Tibial artery (tissue), 4 donors: ENCODE measurements at regions of chr20 and their contacts with region 1.

Region 1: GRCh38 chr20:15930311-15931305 is 642.6 kb downstream of the KIF16B start:
- DNase-seq: no peak
- H3K4me3 ChIP-seq: no peak overlapping the region
- H3K27ac ChIP-seq: peak overlapping the region in 1 of 2 donors; percentile 23
- H3K4me1 ChIP-seq: peaks cover 0 to 17% (median 13%) of the 10 kb centered on the region in 4 donors
- H3K27me3 ChIP-seq: no peaks in the 10 kb centered on the region
- CTCF ChIP-seq: peak; percentile 46 to 48

Region 2: DNA sequence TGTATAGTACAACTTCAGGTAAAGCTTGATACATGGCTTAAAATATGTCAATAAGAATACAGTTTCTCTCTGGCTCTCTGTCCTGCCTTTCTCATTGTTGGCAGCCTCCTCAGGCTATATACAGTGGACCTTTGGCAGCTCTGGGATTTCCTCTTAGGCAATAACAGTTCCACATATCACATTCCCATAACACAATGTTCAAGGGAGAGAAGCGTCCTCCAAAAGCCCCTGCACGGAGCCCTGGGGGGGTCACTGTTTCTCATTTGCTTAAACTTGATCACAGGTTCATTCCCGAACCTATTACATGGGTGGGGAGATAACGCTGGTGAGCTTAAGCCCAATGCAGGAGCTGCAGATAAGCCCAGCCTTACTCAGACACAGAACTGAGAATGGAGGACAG is 1588.8 kb before region 1 on chr20:
- intact Hi-C with region 1: loop called (anchors 5 kb)
- DNase-seq: no peak
- H3K4me3 ChIP-seq: no peak overlapping the region
- H3K27ac ChIP-seq: no peak overlapping the region
- H3K4me1 ChIP-seq: peaks cover 0 to 3% (median under 1%) of the 10 kb centered on the region in 4 donors
- H3K27me3 ChIP-seq: no peaks in the 10 kb centered on the region
- CTCF ChIP-seq: no peak

Region 3: DNA sequence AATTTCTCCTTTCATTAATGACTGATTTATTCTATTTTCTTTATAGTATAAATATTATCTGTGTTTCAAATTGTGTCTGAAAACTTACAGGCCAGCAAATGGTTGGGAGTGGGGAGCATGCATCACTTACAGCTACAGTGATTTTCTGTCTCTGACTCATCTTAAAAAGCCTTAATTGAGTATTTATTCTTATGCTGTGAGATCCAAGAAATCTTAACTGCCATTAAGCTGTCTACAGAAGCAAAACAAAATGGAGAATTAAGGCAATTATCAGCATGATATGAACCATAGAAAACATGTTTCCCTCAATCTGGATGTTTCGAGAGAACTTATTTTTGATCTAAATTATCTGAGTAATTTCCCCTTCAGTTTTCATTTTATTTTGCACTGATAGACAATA is 188.5 kb before region 1 on chr20:
- intact Hi-C with region 1: no loop called
- DNase-seq: no peak
- H3K4me3 ChIP-seq: no peak overlapping the region
- H3K27ac ChIP-seq: no peak overlapping the region
- H3K4me1 ChIP-seq: no peaks in the 10 kb centered on the region
- H3K27me3 ChIP-seq: no peaks in the 10 kb centered on the region
- CTCF ChIP-seq: no peak

Region 4: GRCh38 chr20:15965165-15965564 is 34.6 kb after region 1 on chr20:
- intact Hi-C with region 1: no loop called
- DNase-seq: no peak
- H3K4me3 ChIP-seq: no peak overlapping the region
- H3K27ac ChIP-seq: no peak overlapping the region
- H3K4me1 ChIP-seq: no peaks in the 10 kb centered on the region
- H3K27me3 ChIP-seq: no peaks in the 10 kb centered on the region
- CTCF ChIP-seq: no peak